Prostate gland (tissue), 2 donors: ENCODE measurements at regions of chr5 and their contacts with region 1.

Region 1: DNA sequence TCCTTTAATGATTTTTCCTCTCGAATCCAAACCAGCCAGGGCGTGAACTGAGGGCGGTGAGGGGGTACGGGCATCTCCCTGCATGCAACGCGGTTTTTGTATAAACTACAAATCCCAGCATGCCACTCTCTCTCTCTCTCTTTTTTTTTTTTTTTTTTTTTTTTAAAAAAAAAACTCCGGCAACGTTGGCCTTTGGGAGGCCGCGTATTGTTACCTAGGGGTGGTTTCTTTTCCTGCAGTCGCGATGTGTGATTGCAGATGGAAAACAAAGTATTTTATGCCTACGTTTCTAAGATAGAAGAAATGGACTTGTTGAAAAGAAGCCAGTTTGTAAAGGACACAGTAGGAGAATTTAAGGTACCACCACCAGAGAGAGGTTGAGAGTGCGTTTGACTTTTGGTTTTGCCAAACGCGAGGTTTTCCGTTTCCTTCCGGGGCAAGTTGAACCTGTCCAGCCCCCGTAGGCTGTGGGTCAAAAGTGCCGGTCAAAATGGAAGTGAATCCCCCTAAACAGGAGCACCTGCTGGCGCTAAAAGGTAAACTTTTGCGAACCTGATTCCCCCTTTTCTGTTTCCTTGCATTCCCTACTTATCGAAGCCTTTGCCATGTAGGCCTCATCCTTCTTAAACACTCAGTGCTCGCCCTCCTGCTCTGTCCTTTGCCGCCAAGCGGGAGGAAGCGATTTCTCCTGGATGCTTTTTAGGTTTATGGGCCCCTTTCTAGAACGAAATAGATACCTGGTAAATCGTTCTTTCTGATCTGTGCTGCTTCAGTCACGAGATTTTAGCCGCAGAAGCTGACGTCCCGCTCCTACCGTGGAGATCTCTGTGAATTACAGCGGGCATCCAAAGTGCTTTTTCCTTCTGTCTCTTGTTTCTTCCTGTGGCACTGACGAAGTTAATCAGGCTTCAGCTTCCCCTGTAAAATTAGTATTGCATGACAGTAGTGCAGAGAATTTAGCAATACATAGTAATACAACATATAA is at the starts of genes SHLD3 and TRAPPC13:
- DNase-seq: peak; percentile 81
- H3K4me3 ChIP-seq: peak within 1 kb of the TSS; percentile 76 to 81
- H3K27ac ChIP-seq: peak within 1 kb of the TSS; percentile 84 to 85
- H3K4me1 ChIP-seq: no peaks in the 10 kb centered on the region
- H3K27me3 ChIP-seq: no peaks in the 10 kb centered on the region
- CTCF ChIP-seq: peak in 2 of 4 experiments; percentile 12 to 18
- POLR2A ChIP-seq: no peak
- total RNA-seq, gene SHLD3: 2.1 to 5.6 TPM
- total RNA-seq, gene TRAPPC13: 19.3 to 27.7 TPM

Region 2: GRCh38 chr5:65418661-65419060 is 206.2 kb before region 1 on chr5:
- intact Hi-C with region 1: no loop called
- DNase-seq: no peak
- H3K4me3 ChIP-seq: no peak overlapping the region
- H3K27ac ChIP-seq: no peak overlapping the region
- H3K4me1 ChIP-seq: no peaks in the 10 kb centered on the region
- H3K27me3 ChIP-seq: no peaks in the 10 kb centered on the region
- CTCF ChIP-seq: no peak
- POLR2A ChIP-seq: no peak

Region 3: GRCh38 chr5:65721720-65722574 is 97.1 kb after region 1 on chr5 and contains the starts of genes NLN and SGTB:
- intact Hi-C with region 1: loop called (anchors 5 kb)
- DNase-seq: peak; percentile 87
- H3K4me3 ChIP-seq: peak within 1 kb of the TSS; percentile 96 to 100
- H3K27ac ChIP-seq: peak within 1 kb of the TSS; percentile 74 to 80
- H3K4me1 ChIP-seq: peaks cover 3% of the 10 kb centered on the region
- H3K27me3 ChIP-seq: no peaks in the 10 kb centered on the region
- CTCF ChIP-seq: no peak
- POLR2A ChIP-seq: peak; percentile 35
- total RNA-seq, gene NLN: 10.0 to 10.8 TPM
- total RNA-seq, gene SGTB: 4.9 to 6.1 TPM

Region 4: DNA sequence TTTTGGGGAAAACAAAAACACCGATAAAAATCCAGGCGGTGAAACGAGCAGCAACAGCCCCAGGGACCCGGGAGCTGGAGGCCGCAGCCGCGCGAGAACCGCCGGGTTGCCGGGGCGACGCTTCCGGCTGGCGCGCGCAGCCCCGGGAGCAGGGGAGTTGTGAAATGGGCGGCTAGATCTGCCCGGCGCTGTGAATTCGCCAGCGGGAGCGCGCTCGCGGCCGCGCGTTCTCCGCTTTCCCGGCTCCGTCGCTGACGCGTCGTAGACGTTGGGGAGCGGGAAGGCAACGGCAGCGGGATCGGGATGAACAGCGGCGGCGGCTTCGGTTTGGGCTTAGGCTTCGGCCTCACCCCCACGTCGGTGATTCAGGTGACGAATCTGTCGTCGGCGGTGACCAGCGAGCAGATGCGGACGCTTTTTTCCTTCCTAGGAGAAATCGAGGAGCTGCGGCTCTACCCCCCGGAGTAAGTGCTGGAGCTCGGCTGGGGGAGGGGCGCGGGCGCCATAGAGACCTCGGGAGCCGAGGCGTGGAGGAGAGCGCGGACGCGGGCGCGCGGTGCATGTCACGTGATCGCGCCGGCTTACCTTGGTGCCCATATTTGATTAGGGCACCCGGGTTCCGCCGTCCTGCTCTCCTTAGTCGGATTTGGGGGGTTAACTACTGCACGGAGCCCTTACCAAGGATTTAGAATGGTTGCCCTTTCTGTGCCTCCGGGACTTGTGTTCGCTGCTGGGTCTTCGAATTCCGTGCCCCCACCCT is 519.4 kb after region 1 on chr5 and contains the start of gene SREK1:
- intact Hi-C with region 1: loop called (anchors 10 kb)
- DNase-seq: peak; percentile 90
- H3K4me3 ChIP-seq: peak within 1 kb of the TSS; percentile 82 to 92
- H3K27ac ChIP-seq: peak within 1 kb of the TSS; percentile 99
- H3K4me1 ChIP-seq: no peaks in the 10 kb centered on the region
- H3K27me3 ChIP-seq: no peaks in the 10 kb centered on the region
- CTCF ChIP-seq: peak in 1 of 4 experiments; percentile 13
- POLR2A ChIP-seq: peak; percentile 79
- total RNA-seq, gene SREK1: 65.2 to 67.5 TPM